T-cell (primary cell): ENCODE measurements at regions of chr12 and their contacts with region 1.

Region 1: DNA sequence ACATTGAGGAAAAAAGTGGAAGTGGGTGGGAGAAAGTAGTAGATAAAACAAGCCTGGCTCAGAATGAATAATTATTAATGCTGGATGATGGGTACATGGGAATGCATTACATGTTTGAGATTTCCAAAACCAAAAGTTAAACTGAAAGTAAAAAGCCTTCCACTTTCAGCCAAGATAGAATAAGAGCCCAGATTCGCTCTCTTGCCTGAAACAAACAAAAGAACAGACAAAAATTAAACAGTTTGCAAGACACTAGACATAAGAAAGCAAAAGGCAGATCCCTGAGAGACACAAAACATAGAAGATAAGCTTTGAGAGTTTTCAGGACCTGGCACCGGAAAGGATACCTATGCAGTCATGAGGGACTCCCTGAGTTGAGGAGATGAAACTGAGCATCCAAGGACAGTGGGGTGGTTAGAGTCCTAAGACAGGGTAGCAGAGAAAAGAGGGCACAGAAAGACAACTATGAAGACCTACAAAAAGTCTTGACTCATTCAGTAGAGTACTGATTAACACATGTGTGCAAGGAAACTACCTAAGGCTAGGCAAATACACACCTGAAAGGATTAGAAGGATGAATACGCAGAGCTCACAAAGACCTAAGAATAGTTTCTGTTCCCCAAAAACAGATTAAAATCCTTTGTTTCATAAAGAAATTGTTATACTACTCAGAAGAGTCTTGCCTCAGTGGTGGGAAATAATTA is 54.1 kb downstream of the CEP83 start:
- DNase-seq: no peak
- ATAC-seq: no peak
- H3K4me3 ChIP-seq: no peak overlapping the region
- H3K4me3 Mint-ChIP-seq: peak overlapping the region in 1 of 3 donors; percentile 2
- H3K27ac ChIP-seq: no peak overlapping the region
- H3K27ac Mint-ChIP-seq: peak overlapping the region; percentile 0 to 2
- H3K4me1 ChIP-seq: no peaks in the 10 kb centered on the region
- H3K4me1 Mint-ChIP-seq: peaks cover 10 to 17% (median 11%) of the 10 kb centered on the region in 3 donors
- H3K27me3 ChIP-seq: no peaks in the 10 kb centered on the region
- H3K27me3 Mint-ChIP-seq: no peaks in the 10 kb centered on the region

Region 2: GRCh38 chr12:94386422-94386821 is 19.1 kb before region 1 on chr12:
- CTCF ChIA-PET with region 1: no interaction called
- POLR2A ChIA-PET with region 1: interaction called in 1 of 2 experiments, 10 read pairs
- DNase-seq: no peak
- ATAC-seq: no peak
- H3K4me3 ChIP-seq: no peak overlapping the region
- H3K4me3 Mint-ChIP-seq: no peak overlapping the region
- H3K27ac ChIP-seq: no peak overlapping the region
- H3K27ac Mint-ChIP-seq: no peak overlapping the region
- H3K4me1 ChIP-seq: no peaks in the 10 kb centered on the region
- H3K4me1 Mint-ChIP-seq: no peaks in the 10 kb centered on the region
- H3K27me3 ChIP-seq: no peaks in the 10 kb centered on the region
- H3K27me3 Mint-ChIP-seq: no peaks in the 10 kb centered on the region